ENCODE measurements at regions of chr13 and their contacts with region 1.

Region 1: DNA sequence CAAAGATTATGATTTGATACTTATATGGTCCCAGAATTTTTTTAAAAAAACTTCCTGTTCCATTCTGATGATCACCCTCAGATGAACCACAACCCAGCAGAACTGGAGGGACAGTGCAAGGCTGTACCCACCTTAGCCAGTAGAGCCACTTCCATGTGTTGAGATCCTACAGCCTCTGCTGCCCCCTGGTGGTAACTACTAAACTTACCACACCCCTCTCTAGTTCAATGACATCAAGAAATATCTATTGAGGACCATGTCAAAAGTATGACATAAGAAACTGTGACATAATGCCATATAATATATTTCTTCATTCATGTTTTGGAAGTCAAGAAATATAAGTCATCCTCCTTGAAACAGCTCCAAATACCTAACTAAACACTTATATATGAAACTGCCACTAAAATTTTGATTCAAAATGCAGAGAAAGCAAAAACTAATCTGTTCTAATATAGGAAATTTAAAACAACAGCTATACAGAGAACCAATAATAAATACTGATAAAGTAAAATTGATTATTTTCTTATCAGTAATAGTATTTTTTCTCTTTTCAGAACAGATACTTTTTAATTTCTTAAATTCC is 412.6 kb downstream of the KCTD12 start:
- DNase-seq: peak; percentile 79

Region 2: DNA sequence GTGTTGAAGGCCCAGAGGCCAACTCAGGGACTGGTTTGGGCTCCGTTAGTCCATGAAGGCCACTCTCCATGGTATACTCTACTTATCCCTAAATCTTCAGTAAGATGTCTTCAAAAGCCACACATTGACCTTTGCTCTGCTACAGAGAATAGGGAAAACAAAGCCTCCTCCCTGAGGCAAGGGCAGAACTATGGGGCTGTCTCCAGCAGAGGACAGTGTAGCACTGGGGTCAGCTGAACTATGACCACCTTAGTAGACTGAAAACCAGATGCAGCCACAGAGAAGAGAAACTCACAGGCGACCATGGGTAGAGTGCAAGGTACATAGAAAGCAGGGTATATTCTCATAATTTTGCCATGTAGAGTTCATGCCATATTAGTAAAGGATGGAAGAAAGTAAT is 250.1 kb before region 1 on chr13:
- intact Hi-C with region 1: loop called (anchors 5 kb)
- DNase-seq: no peak

Region 3: DNA sequence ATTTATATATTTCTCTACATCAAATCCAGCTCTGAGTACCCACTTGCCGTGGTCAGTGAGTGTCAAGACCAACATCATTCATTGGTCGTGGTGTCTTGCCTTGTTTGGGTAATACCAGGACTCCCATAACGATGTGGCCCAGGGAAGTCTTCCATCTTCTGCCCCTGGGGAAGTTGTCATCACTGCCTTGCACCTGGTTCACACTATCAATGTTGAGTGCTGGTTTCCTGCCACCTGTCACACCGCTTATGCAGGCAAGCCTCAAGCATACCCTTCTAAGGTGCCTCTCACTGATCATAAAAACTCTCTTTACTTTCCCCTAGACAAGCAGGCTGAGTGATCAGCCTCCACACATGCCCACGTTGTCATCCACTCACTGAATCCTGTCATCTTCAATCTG is 30.1 kb after region 1 on chr13:
- intact Hi-C with region 1: no loop called
- DNase-seq: no peak

Region 4: GRCh38 chr13:76538004-76538403 is 64.4 kb after region 1 on chr13:
- intact Hi-C with region 1: no loop called
- DNase-seq: no peak

Region 5: DNA sequence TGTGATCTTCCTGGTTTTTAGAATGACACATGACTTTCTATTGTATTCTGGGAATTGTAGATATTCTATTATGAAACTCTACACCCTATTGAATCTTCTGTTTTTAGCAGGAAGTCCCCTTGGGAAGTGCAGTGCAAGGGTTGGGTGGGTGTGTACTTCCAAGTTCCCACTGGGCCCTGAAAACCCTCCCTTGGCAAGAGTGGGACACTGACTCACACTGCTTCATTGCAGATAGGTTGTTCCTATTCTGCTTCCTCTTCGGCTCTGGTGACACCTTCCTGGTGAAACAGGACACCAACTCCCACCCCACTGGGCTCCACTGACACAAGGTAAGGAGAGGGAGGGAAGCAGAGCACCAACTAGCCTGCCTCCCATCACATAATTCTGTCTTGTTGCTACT is 290.8 kb after region 1 on chr13:
- intact Hi-C with region 1: no loop called
- DNase-seq: peak; percentile 79